ENCODE measurements at regions of chr9 and their contacts with region 1.

Region 1: GRCh38 chr9:88041447-88041846 is 67.1 kb upstream of the CDK20 start:
- DNase-seq: peak; percentile 22
- ATAC-seq: no peak; the same call in 1 of the 2 replicates
- H3K4me3 ChIP-seq: no peak overlapping the region
- H3K27ac ChIP-seq: no peak overlapping the region
- H3K4me1 ChIP-seq: no peaks in the 10 kb centered on the region
- H3K27me3 ChIP-seq: no peaks in the 10 kb centered on the region
- CTCF ChIP-seq: peak; percentile 54
- POLR2A ChIP-seq: no peak
- RAD21 ChIP-seq: peak; percentile 60

Region 2: DNA sequence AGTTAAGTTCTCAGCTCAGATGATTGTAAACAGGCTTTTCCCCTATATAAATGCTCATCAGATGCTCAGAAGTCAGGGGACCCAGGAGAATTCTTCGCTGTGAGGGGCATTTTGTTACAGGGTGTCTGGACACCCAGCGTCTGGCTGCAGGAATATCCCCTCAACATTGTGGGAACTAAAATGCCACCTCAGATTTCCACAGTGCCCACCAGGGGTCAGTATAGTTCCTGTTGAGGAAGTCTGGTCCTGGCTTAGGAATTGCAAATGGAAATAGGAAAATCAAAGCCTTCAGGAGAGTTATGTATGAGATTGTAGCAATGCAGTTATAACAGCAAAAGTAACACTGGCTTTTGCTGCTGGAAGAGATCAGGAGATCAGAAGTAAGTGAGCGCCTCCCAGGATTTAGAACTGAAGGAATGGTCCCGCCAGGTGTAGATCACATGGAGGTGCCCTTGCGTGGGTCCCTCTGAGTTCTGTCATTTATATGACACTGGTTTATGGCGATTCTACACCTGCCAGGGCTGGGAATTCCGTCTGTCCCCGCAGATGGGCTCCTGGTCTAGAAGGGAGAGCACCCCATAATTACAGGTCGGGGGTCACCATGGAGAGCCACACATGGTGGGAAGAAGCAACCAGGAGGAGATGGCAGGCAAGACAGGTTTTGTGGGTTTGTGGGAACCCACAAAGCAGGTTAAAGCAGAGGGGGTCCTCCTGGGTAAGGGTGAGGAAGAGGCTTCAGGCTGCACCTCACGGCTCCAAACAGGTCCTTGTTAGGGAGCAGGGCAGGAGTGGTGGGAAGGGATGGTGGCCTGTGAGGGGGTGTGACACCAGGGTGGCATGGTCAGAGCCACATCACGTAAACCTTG is 362.6 kb before region 1 on chr9:
- CTCF ChIA-PET with region 1: interaction called, 3 read pairs
- POLR2A ChIA-PET with region 1: no interaction called
- dilution Hi-C with region 1: no loop called
- in situ Hi-C with region 1: loop called (anchors 25 kb)
- intact Hi-C with region 1: loop called (anchors 1 kb)
- DNase-seq: peak; percentile 74
- ATAC-seq: peak; percentile 88
- H3K4me3 ChIP-seq: no peak overlapping the region
- H3K27ac ChIP-seq: no peak overlapping the region
- H3K4me1 ChIP-seq: no peaks in the 10 kb centered on the region
- H3K27me3 ChIP-seq: peaks cover 2% of the 10 kb centered on the region; the same call in 1 of the 2 replicates
- CTCF ChIP-seq: peak; percentile 91
- POLR2A ChIP-seq: no peak
- RAD21 ChIP-seq: peak; percentile 89

Region 3: DNA sequence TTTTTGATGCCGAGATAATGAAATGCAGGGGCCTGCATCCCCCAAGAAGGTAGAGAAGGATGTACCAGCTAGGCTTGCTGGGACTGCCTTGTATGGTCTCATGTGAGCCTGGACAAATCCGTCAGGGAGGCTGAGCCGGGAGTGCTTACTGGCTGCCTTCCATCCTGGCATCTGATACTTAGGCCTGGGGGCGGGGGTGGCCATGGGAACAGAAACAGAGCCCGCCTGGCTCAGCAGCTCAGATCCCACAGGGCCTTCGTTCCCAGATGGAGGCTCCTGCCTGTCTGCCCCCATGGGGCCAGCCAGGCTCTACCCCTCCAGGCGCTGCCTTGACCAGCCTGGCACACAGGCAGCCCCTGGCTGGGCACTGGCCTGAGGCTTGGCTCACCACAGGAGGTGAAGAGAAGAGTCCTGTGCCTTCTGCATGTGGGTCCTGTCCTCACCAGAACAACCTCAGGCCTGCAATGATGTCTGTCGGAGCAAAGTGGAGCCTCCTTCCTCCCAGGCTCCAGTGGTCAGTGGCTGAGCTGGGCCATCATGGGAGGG is 169.3 kb before region 1 on chr9:
- CTCF ChIA-PET with region 1: no interaction called
- POLR2A ChIA-PET with region 1: no interaction called
- dilution Hi-C with region 1: no loop called
- in situ Hi-C with region 1: no loop called
- intact Hi-C with region 1: no loop called
- DNase-seq: peak; percentile 36
- ATAC-seq: peak; percentile 5; the same call in 1 of the 2 replicates
- H3K4me3 ChIP-seq: no peak overlapping the region
- H3K27ac ChIP-seq: no peak overlapping the region
- H3K4me1 ChIP-seq: peaks cover 21% of the 10 kb centered on the region
- H3K27me3 ChIP-seq: no peaks in the 10 kb centered on the region
- CTCF ChIP-seq: no peak
- POLR2A ChIP-seq: no peak
- RAD21 ChIP-seq: no peak

Region 4: DNA sequence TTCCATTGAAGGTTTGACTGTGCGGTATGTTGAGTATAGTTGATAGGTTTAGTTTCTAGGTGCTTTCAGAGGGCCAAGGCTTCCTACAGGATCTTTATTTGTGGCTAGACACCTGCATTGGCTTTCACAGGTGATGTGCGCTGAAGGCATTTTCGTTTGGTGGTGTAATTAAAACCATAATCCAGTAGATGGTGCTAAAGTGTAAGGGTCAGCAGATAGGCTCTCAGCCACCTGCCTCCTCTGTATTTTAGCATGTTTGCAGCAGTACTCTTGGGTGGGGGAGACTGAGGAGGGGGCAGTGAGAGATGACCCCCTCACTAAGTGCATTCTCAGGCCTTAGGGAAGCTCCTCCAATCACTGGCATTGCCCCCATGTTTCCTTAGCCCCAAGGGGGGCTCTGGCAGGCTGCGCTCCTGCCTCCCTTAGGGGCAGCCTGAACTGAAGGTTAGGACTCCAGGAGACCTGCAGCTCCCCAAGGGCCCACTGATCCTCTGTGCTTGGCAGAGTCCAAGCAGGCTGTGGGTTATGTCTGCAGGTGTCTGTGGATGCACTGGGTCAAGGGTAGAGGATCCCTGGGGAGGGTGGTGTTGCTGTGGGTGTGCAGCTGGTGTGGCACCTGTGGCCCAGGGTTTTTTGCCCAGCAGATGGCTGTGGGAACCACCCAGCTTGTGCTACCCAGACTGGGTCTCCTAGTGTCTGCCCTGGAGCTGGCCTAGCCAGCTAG is 90.5 kb before region 1 on chr9:
- CTCF ChIA-PET with region 1: no interaction called
- POLR2A ChIA-PET with region 1: no interaction called
- dilution Hi-C with region 1: no loop called
- in situ Hi-C with region 1: no loop called
- intact Hi-C with region 1: loop called (anchors 1 kb)
- DNase-seq: peak; percentile 34
- ATAC-seq: peak; percentile 77
- H3K4me3 ChIP-seq: no peak overlapping the region
- H3K27ac ChIP-seq: no peak overlapping the region
- H3K4me1 ChIP-seq: no peaks in the 10 kb centered on the region
- H3K27me3 ChIP-seq: peaks cover 5% of the 10 kb centered on the region
- CTCF ChIP-seq: peak; percentile 61
- POLR2A ChIP-seq: no peak
- RAD21 ChIP-seq: peak; percentile 82

Region 5: DNA sequence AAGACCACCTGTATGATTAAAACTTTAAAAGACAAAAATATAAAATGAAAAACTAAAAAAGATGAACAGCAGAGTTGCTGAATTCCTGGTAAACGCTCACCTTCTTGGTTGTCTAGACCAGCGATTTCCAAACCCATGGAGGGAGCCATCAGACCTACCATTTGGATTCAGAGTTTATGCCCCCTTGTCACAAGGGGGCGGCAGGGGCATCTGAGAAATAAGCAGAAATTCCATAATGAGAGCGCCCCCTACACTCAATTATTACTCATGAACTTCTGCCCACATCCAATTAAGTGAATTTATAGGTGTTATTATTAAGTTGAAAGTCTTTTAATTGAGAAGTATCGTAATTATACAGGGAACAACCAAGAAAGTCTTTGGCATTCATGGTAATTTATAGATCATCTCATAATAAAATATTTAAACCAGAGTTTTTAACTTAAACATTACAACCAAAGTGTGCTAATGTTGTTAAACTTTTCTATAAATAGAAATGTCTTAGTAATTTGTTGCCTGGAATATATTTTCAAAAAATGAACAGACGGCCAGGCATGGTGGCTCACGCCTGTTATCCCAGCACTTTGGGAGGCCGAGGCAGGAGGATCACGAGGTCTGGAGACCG is 132.0 kb after region 1 on chr9:
- CTCF ChIA-PET with region 1: no interaction called
- POLR2A ChIA-PET with region 1: no interaction called
- dilution Hi-C with region 1: no loop called
- in situ Hi-C with region 1: no loop called
- intact Hi-C with region 1: no loop called
- DNase-seq: peak; percentile 73
- ATAC-seq: peak; percentile 65; the same call in 1 of the 2 replicates
- H3K4me3 ChIP-seq: no peak overlapping the region
- H3K27ac ChIP-seq: no peak overlapping the region
- H3K4me1 ChIP-seq: no peaks in the 10 kb centered on the region
- H3K27me3 ChIP-seq: peaks cover 7% of the 10 kb centered on the region; the same call in 1 of the 2 replicates
- CTCF ChIP-seq: peak; percentile 99
- POLR2A ChIP-seq: no peak
- RAD21 ChIP-seq: peak; percentile 77

Region 6: GRCh38 chr9:88781628-88782391 is 740.4 kb after region 1 on chr9:
- CTCF ChIA-PET with region 1: no interaction called
- POLR2A ChIA-PET with region 1: no interaction called
- dilution Hi-C with region 1: no loop called
- in situ Hi-C with region 1: no loop called
- intact Hi-C with region 1: no loop called
- DNase-seq: peak; percentile 74
- ATAC-seq: peak; percentile 80
- H3K4me3 ChIP-seq: no peak overlapping the region
- H3K27ac ChIP-seq: peak overlapping the region; percentile 44; the same call in 1 of the 2 replicates
- H3K4me1 ChIP-seq: peaks cover 26% of the 10 kb centered on the region
- H3K27me3 ChIP-seq: no peaks in the 10 kb centered on the region
- CTCF ChIP-seq: peak; percentile 53
- POLR2A ChIP-seq: no peak
- RAD21 ChIP-seq: peak; percentile 64

Measured in IMR-90 (cell line).